Activated T-helper 2 cell treated with anti-CD3 and anti-CD28 coated beads, Interferon-gamma antibody, Interleukin-2, Interleukin-4, amounts not matched to agents 10 μg/mL and 5 μg/mL and 100 μg/mL, durations not matched to agents 14 hours and 24 hours and 36 hours (primary cell): ENCODE measurements at regions of chr2 and their contacts with region 1.

Region 1: DNA sequence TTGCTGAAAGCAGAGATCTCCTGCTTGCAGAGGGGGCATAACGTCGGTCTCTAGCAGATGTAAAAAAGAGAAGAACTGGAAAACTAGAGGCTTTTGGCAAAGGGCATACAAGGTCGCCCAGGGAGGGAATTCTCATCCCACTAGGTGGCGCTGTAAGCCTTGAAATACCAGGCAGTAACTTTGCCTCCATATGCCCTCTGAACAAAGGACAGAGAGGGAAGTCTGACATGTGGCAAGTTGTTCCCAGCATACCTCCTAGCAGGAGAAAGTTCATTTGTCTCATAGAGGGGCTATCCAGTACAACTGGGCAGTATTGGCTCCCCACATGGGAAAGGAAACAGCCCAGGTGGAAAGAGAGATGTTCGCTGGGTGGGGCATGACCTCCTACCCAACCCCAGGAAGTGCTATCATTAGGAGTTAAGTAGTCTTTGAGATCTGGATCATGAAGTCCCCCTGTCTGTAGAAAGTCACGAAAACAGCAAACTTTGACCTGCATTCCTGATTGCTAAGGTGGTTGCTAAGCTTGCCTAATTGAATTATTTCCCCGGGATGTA is 39.9 kb downstream of the STK17B start:
- DNase-seq: peak; percentile 40
- H3K4me3 Mint-ChIP-seq: no peak overlapping the region
- H3K27ac Mint-ChIP-seq: peak overlapping the region; percentile 51
- H3K4me1 Mint-ChIP-seq: peaks cover 2% of the 10 kb centered on the region
- H3K27me3 Mint-ChIP-seq: no peaks in the 10 kb centered on the region

Region 2: DNA sequence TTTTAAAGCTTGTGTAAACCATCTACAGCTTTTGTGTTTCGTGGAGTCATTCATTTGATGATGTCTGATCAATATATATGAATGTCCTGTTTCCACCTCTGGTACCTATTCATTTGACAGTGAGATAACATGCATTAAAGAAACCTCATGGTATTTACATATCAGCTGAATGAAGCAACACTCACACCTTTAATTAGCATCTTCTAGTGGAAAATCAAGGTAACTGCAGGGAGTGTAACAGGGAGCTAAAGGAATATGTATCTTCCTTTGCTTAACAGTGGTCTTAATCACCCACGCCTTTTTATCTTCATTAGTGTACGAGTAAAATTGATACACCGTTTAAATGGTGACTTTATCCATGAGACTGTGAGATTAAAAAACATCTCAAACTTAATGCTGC is 458.8 kb before region 1 on chr2:
- intact Hi-C with region 1: no loop called
- DNase-seq: no peak
- H3K4me3 Mint-ChIP-seq: no peak overlapping the region
- H3K27ac Mint-ChIP-seq: no peak overlapping the region
- H3K4me1 Mint-ChIP-seq: peaks cover 10% of the 10 kb centered on the region
- H3K27me3 Mint-ChIP-seq: no peaks in the 10 kb centered on the region

Region 3: DNA sequence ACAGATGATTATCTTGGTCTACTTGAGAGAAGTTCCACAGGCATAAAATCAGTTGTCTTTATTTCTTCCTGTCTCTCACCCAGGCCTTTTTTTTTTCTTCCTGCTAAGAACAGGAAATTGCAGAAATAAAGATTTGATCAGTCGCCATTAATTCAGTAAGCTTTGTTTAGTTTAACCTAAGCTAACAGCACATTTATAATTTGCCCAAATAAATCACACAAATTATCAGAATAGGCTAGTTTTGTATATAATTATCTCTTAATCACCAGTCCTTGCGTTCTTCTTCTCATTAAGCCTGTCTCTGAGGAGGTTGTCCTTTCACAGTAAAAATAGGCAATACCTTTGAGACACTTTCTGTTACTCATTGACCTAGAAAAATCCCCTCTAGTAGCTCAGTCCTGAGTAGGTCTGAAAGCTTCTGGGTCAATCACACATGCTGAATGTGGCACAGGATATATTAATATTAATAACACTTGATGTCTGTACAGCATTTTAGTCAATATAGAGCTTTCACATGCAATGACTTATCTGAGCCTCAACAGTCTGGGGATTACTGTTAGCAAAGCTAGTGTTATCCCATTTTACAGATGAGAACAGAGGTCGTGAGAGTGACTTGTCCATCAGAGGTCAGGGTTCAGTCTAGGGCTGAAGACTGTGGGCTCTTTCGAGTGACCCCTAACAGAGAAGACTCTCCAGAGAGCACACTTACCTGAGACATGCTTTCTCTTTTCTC is 51.1 kb after region 1 on chr2:
- intact Hi-C with region 1: no loop called
- DNase-seq: no peak
- H3K4me3 Mint-ChIP-seq: peak overlapping the region; percentile 74
- H3K27ac Mint-ChIP-seq: peak overlapping the region; percentile 96
- H3K4me1 Mint-ChIP-seq: peaks cover 68% of the 10 kb centered on the region
- H3K27me3 Mint-ChIP-seq: no peaks in the 10 kb centered on the region

Region 4: GRCh38 chr2:196337208-196337953 is 205.9 kb after region 1 on chr2:
- intact Hi-C with region 1: loop called (anchors 1 kb)
- DNase-seq: no peak
- H3K4me3 Mint-ChIP-seq: no peak overlapping the region
- H3K27ac Mint-ChIP-seq: no peak overlapping the region
- H3K4me1 Mint-ChIP-seq: peaks cover 4% of the 10 kb centered on the region
- H3K27me3 Mint-ChIP-seq: peaks cover 14% of the 10 kb centered on the region

Region 5: GRCh38 chr2:196453613-196454047 is 322.2 kb after region 1 on chr2:
- intact Hi-C with region 1: loop called (anchors 2 kb)
- DNase-seq: no peak
- H3K4me3 Mint-ChIP-seq: no peak overlapping the region
- H3K27ac Mint-ChIP-seq: no peak overlapping the region
- H3K4me1 Mint-ChIP-seq: peaks cover 2% of the 10 kb centered on the region
- H3K27me3 Mint-ChIP-seq: peaks cover 32% of the 10 kb centered on the region